ENCODE measurements at regions of chr9 and their contacts with region 1.

Region 1: GRCh38 chr9:97411789-97412625 is at the start of gene TDRD7:
- DNase-seq: peak; percentile 84
- H3K4me3 Mint-ChIP-seq: peak within 1 kb of the TSS; percentile 84
- H3K27ac Mint-ChIP-seq: peak within 1 kb of the TSS; percentile 6
- H3K4me1 Mint-ChIP-seq: peaks cover 23% of the 10 kb centered on the region
- H3K27me3 Mint-ChIP-seq: peaks cover 38% of the 10 kb centered on the region
- total RNA-seq, gene TDRD7: 4.4 and 5.5 TPM in 2 replicates

Region 2: GRCh38 chr9:96080364-96080763 is 1331.6 kb before region 1 on chr9:
- intact Hi-C with region 1: no loop called
- DNase-seq: no peak
- H3K4me3 Mint-ChIP-seq: no peak overlapping the region
- H3K27ac Mint-ChIP-seq: no peak overlapping the region
- H3K4me1 Mint-ChIP-seq: no peaks in the 10 kb centered on the region
- H3K27me3 Mint-ChIP-seq: peaks cover 8% of the 10 kb centered on the region

Region 3: GRCh38 chr9:97293207-97293721 is 118.7 kb before region 1 on chr9:
- intact Hi-C with region 1: no loop called
- DNase-seq: no peak
- H3K4me3 Mint-ChIP-seq: no peak overlapping the region
- H3K27ac Mint-ChIP-seq: no peak overlapping the region
- H3K4me1 Mint-ChIP-seq: peaks cover 2% of the 10 kb centered on the region
- H3K27me3 Mint-ChIP-seq: no peaks in the 10 kb centered on the region

Region 4: DNA sequence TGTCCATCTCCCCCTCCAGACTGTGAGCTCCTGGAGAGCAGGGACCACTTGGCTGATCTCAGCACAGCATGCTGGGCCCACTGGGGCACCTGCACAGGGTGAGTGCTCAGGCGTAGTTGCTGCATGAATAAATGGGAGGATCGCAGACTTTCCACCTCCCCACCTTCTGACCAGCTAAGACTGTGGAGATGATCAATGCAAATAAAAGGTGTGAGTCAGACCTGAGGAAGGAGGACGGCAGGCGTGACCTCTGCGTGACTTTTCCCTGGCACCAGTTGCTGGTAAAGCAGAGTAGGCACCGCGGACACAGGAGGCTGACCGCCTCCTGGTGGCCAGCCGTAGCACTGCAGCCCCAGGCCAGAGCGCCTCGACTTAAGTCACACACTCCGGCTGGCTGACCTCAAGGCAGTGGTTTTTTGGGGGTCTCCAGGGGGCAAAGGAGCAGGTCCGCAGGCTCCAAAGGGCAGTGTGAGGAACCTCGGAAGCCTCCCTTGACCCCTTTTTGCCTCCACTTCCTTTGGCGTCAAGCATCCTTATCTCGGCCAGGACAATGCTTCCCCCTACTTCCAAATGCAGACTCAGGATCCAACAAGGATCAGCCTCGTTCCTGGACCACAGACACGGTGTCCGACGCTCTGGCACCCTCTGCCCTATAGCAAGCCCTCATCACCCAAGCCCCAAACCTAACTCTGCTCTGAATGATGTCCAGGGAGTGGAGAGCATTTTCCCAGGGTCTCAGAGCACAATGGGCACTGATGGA is 12.8 kb before region 1 on chr9:
- intact Hi-C with region 1: loop called (anchors 2 kb)
- DNase-seq: peak; percentile 45
- H3K4me3 Mint-ChIP-seq: no peak overlapping the region
- H3K27ac Mint-ChIP-seq: no peak overlapping the region
- H3K4me1 Mint-ChIP-seq: peaks cover 10% of the 10 kb centered on the region
- H3K27me3 Mint-ChIP-seq: peaks cover 35% of the 10 kb centered on the region

Region 5: DNA sequence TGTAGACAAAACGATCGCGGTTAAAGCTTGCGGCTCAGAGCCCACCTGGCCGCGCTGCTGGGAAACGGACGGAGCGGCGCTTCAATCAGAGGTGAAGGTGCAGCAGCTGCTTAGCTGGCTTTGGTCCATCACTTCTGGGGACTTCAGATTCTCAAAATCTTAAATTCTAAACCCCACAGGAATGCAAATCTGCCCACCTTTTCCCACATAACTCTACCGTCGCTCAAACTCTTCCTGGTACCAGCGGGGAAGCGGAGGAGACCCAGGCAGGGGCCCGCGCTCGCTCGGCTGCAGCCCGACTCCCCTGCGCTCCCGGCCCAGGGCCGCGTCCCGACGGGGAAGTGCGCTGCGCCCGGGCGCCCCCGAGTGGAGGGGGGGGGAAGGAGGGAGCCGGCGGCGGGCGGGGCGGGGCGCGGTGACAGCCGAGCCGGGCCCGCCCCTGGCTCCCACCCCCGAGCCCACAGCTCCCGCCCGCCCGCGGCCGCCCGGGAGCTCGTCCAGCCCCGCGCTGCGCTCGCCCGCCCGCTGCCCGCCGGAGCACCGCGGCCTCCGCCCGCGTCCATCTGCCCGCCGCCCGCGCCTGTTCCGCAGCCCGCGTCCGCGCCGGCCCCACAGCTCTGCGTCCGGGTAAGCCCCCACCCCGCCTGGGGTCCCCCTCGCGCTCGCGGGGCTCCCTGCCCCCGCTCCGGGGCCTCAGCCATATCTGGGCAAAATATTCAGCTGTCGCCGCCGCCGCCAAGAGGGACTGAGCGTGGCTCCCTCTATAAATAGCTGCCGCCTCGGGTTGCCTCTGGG is 89.4 kb after region 1 on chr9 and contains the start of gene TMOD1:
- intact Hi-C with region 1: loop called (anchors 5 kb)
- DNase-seq: no peak
- H3K4me3 Mint-ChIP-seq: peak within 1 kb of the TSS; percentile 73
- H3K27ac Mint-ChIP-seq: no peak within 1 kb of the TSS
- H3K4me1 Mint-ChIP-seq: peaks cover 13% of the 10 kb centered on the region
- H3K27me3 Mint-ChIP-seq: peaks cover 48% of the 10 kb centered on the region
- total RNA-seq, gene TMOD1: 0.96 and 0.97 TPM in 2 replicates

Region 6: DNA sequence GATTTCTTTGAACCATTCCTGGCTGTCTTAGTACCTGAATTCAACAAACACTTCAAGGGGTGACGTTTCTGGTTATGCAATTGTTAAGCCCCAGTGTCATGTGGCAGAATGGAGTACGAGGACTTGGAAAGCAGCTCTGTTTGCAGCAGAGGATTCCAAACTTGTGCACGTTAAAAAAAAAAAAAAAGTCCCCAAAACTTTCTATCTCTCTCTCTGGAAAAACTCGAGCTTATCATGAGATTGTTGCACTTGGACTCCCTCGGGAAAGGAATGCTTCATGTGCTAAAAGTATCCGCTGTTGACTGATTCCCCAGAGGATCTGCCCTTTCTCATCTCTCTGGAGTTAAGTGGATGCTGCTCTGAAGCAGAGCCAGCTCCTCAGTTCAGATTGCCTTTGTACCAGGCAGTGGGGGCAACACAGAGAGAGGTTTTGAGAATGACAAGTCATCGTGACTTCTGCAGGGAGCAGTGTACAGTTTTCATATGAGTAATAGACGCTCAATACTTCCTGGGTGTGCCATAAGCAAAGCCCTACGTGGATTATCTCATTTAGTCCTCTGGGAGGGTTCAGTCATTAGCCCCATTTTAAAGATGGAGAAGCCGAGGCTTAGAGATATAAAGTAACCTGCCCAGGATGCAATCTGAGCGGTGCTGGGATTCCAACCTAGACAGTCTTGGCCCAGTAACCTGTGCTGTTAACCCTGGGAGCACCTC is 117.5 kb after region 1 on chr9:
- intact Hi-C with region 1: no loop called
- DNase-seq: no peak
- H3K4me3 Mint-ChIP-seq: no peak overlapping the region
- H3K27ac Mint-ChIP-seq: peak overlapping the region; percentile 27
- H3K4me1 Mint-ChIP-seq: peaks cover 5% of the 10 kb centered on the region
- H3K27me3 Mint-ChIP-seq: peaks cover 2% of the 10 kb centered on the region

Region 7: DNA sequence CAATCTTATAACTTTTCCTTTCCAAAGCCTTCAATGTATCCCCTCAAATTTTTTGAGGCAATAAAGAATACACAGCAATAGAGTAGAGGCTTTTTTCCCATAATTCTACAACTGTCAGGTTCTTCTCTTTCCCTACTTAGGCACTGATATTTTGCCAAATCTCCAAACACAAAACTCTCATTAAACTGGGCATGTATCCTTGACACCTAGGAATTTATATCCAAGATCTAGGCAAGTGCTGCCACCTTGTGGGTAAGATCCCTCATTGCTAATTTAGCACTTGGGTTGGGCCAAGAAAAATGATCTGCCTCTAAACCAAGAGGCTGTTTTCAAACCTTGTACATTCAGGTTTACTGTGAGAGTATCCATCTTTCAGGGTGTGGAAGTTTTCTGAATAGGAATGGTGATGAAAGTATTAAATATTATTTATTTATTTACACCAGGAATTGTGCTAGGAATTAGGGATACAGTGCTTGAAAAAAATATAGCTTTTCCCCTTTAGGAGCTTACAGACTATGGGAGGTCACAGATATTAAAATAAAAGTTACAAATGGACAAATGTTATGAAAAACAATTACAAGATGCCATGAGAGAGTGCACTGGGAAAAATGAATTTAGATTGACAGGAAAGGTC is 203.5 kb after region 1 on chr9:
- intact Hi-C with region 1: loop called (anchors 1 kb)
- DNase-seq: peak; percentile 29
- H3K4me3 Mint-ChIP-seq: no peak overlapping the region
- H3K27ac Mint-ChIP-seq: no peak overlapping the region
- H3K4me1 Mint-ChIP-seq: peaks cover 17% of the 10 kb centered on the region
- H3K27me3 Mint-ChIP-seq: no peaks in the 10 kb centered on the region

Region 8: DNA sequence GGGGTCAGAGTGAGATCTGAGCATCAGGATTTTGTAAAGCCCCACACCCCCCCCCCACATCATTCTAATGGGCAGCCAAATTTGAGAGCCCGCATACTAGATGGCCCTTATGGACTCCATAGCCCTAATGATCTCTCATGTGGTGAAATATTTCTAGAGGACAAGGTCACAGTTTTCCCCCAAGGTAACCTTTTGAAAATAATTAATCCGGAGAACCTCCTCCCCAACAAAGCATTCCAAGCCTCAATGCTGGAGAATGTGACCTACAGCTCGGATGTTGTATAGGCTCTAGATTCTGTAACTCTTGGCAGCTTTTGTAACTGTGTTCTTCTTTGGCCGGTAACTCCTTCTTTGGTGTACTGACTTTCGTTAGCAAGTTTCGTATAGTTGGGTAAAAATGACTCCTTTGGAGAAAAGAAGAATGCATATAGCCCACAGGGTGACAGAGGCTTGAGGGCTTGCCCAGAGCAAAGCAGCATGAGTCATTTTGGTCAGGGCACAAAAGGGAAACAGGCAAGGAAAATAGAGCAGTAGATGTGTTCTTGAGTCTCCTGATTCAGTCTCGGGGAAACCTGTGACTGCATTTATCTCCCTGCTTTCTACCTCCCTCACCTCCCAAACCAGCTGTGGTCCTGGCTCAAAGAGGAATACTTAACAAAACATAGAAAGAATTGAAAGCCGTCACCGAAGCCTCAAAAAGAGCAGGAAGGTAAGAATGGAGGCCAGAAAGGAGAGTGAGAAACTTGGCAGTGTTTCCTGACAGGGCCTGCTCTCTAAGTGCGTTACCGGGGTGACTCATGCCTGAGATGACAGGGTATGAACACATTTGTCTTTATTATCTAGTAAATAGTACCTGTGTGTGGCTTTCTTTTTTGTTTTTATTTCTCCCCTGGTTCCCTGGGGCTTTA is 291.7 kb after region 1 on chr9:
- intact Hi-C with region 1: loop called (anchors 10 kb)
- DNase-seq: no peak
- H3K4me3 Mint-ChIP-seq: no peak overlapping the region
- H3K27ac Mint-ChIP-seq: peak overlapping the region; percentile 86
- H3K4me1 Mint-ChIP-seq: peaks cover 33% of the 10 kb centered on the region
- H3K27me3 Mint-ChIP-seq: peaks cover 20% of the 10 kb centered on the region

Measured in activated T-helper 2 cell treated with anti-CD3 and anti-CD28 coated beads, Interferon-gamma antibody, Interleukin-2, Interleukin-4, amounts not matched to agents 10 μg/mL and 5 μg/mL and 100 μg/mL, durations not matched to agents 14 hours and 24 hours and 36 hours (primary cell).